ENCODE measurements at regions of chr14 and their contacts with region 1.

Region 1: GRCh38 chr14:89252887-89253547 is 164.0 kb downstream of the FOXN3 start:
- DNase-seq: no peak
- ATAC-seq: peak in 6 of 8 donors; percentile 9 to 58 (median 36)
- H3K4me3 ChIP-seq: no peak overlapping the region
- H3K27ac ChIP-seq: no peak overlapping the region
- H3K4me1 ChIP-seq: peaks cover 2 to 62% (median 43%) of the 10 kb centered on the region in 9 donors
- H3K27me3 ChIP-seq: no peaks in the 10 kb centered on the region
- CTCF ChIP-seq: peak in 1 of 9 donors; percentile 14

Region 2: GRCh38 chr14:89214221-89214936 is 38.6 kb before region 1 on chr14:
- intact Hi-C with region 1: loop called in 1 of 10 experiments (anchors 1 kb)
- DNase-seq: peak; percentile 63 to 80
- ATAC-seq: peak; percentile 86 to 97 (median 94)
- H3K4me3 ChIP-seq: no peak overlapping the region
- H3K27ac ChIP-seq: peak overlapping the region in 6 of 10 donors; percentile 22 to 59 (median 45)
- H3K4me1 ChIP-seq: peaks cover 10 to 41% (median 29%) of the 10 kb centered on the region in 9 donors
- H3K27me3 ChIP-seq: no peaks in the 10 kb centered on the region
- CTCF ChIP-seq: peak in 5 of 9 donors; percentile 6 to 62 (median 49)

Region 3: DNA sequence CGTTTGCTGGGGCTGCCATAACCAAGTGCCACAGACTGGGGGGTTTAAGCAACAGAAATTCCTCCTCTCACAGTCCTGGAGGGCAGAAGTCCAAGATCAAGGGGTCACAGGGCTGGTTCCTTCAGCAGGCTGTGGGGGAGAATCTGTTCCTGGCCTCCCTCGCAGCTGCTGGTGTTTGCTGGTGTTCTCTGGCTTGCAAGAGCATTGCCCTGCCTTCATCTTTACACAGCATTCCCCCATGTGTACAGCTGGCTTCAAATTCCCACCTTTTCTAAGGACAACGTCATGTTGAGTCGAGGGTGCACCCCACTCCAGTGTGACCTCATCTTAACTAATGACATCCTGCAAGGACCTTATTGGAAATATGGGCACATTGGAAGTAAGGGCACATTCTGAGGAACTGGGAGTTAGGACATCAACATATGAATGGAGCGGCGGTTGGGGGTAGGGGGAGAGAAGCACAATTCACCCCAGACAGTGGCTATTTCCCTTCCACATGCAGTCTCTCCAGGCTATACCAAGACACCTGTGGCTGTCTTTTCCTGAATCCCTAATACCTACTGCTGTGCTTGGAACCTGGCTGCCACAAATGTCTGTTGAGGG is 40.4 kb after region 1 on chr14:
- intact Hi-C with region 1: loop called in 1 of 10 experiments (anchors 5 kb)
- DNase-seq: no peak
- ATAC-seq: peak in 4 of 8 donors; percentile 15 to 25 (median 22)
- H3K4me3 ChIP-seq: no peak overlapping the region
- H3K27ac ChIP-seq: peak overlapping the region in 7 of 10 donors; percentile 9 to 56 (median 37)
- H3K4me1 ChIP-seq: peaks cover 7 to 35% (median 24%) of the 10 kb centered on the region in 9 donors
- H3K27me3 ChIP-seq: no peaks in the 10 kb centered on the region
- CTCF ChIP-seq: no peak